MCF 10A (cell line): ENCODE measurements at regions of chr12 and their contacts with region 1.

Region 1: DNA sequence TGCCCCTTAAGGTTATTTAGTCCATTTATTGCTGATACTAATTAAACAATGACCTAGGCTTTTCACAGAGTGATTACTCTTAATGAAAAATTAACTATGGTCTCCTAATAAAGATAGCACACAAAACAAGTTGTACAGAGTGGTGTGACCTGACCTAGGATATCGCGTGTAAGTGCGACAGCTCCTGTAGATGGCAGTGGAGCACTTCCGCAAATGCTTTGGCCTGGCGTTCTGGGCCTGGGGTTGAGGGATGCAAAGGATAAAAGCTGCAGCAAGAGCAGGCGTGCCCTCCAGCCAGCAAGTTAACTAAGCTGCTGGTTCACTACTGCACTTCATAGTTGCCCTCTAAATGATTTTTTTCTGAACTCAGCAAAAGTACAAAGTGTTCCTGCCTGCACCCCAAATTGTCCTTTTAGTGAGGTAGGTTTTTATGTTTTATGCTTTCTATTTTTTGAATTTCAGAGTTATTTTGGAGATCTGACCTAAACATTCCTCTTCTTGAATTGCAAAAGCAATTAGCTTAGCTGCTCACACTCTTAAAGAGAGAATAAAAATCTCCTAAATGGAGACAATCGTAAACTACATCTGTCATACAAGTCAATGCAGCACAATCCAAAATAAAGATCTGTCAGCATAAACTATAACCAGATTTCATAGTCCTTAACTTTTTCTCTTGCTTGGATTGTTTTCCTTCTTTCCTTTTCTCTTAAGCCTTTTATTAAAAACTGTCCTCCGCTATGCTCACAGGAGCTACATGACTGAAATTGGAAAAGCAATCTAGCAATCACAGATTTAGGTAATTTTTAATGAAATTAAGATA is 379.6 kb downstream of the LRIG3 start:
- DNase-seq: peak; percentile 78
- H3K4me3 Mint-ChIP-seq: no peak overlapping the region
- H3K27ac Mint-ChIP-seq: no peak overlapping the region
- H3K4me1 Mint-ChIP-seq: peaks cover 20% of the 10 kb centered on the region
- H3K27me3 Mint-ChIP-seq: no peaks in the 10 kb centered on the region
- CTCF ChIP-seq: peak; percentile 91

Region 2: DNA sequence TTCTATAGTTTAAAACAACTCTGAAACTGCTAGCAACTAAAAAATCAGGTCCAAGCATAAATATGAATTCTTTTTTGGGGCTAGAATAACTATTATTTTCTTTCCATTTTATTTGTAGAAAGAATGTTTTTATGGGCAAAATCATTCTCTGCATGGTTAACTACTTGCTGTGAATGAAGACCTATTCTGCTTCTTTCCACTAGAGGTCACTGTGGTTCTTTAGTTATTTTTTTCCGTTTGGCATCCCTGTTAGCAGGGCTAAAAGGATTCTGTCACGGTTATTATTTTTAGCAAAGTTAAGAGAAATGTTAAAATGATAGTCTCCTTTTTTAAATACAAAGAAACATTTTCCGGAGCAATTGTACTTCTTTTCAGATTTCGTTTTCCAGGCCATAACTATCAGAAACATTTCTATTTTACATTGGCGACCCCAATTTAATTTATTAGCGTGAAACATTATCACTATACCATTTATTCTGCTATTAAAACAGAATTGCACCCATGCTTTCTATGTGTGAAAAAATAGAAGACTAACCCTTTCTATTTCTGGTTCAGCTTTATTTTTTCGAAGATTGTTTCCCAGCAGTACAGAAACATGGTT is 194.6 kb before region 1 on chr12:
- CTCF ChIA-PET with region 1: interaction called, 15 read pairs
- POLR2A ChIA-PET with region 1: interaction called, 3 read pairs
- intact Hi-C with region 1: loop called (anchors 2 kb)
- DNase-seq: peak; percentile 45
- H3K4me3 Mint-ChIP-seq: no peak overlapping the region
- H3K27ac Mint-ChIP-seq: no peak overlapping the region
- H3K4me1 Mint-ChIP-seq: no peaks in the 10 kb centered on the region
- H3K27me3 Mint-ChIP-seq: no peaks in the 10 kb centered on the region
- CTCF ChIP-seq: peak; percentile 55

Region 3: DNA sequence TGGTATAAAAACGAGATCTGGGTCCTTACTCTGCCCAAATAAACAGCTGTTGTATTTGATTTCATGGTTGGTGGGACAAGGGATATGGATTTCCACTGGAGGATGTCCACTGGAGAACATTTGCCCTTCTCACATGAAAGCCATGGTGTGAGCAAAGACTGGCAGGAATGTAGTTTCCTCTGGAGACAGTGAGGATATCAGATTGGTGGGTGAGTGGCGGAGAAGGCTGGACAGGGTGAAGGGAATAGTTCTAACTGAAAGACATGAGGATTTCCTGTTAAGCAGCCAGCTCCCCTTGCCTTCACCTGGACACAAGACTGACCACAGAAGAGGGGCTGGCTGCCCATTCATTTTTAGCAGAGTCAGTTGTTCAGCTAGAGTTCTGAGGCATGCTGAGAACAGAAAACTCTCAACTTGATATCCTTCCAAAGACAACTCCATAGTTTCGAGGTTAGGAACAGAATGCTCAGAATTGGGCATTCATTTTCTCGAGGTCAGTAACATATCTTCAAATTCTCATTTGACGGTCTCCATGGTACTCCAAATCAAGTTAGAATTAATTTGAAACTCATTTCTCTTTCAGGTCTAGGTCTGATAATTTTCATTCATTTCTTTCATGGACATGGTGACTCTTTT is 13.9 kb after region 1 on chr12:
- CTCF ChIA-PET with region 1: interaction called, 26 read pairs
- POLR2A ChIA-PET with region 1: interaction called, 3 read pairs
- intact Hi-C with region 1: no loop called
- DNase-seq: no peak
- H3K4me3 Mint-ChIP-seq: no peak overlapping the region
- H3K27ac Mint-ChIP-seq: no peak overlapping the region
- H3K4me1 Mint-ChIP-seq: peaks cover 5% of the 10 kb centered on the region
- H3K27me3 Mint-ChIP-seq: no peaks in the 10 kb centered on the region
- CTCF ChIP-seq: no peak

Region 4: GRCh38 chr12:58888131-58888783 is 347.6 kb after region 1 on chr12:
- CTCF ChIA-PET with region 1: interaction called, 18 read pairs
- POLR2A ChIA-PET with region 1: interaction called, 3 read pairs
- intact Hi-C with region 1: no loop called
- DNase-seq: peak; percentile 26
- H3K4me3 Mint-ChIP-seq: no peak overlapping the region
- H3K27ac Mint-ChIP-seq: peak overlapping the region; percentile 80
- H3K4me1 Mint-ChIP-seq: peaks cover 11% of the 10 kb centered on the region
- H3K27me3 Mint-ChIP-seq: no peaks in the 10 kb centered on the region
- CTCF ChIP-seq: no peak

Region 5: DNA sequence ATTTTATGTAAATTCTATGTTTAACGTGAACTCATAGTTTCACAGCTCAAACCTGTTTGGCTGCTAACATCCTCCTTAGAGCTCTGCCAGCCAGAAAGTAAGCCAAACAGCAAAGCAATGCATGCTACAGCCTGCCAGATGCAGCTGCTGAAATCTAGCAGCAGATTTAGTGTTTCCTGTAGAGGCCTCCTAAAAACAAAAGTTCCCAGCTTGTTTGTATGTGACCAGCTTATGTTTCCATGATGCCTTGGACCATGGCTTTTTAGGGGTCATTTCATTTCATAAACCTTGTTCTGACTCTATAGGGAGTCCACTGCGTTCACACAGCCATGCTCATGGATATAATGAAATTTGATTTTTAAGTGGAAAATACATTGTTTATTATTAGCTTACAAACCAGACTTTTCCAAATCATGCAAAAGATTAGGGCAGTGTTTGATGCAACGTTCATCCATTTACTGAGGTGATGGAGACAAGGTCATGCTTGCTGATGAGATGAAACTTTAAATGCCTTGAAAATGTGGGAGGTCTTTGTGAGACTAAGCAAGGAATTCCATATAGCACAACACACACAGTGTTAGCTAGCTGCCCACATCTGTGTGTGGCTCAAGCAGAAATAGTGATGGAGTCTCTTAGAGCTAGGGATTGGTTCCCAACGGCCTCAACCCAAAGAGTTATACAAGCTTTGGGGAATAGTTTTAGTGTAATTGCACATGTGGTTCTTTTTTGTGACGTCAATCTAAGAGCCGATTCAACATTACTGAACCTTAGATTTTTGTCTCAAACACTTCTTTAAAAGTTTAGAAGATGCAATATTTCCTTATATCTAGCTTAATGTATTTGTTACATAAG is 537.1 kb after region 1 on chr12:
- CTCF ChIA-PET with region 1: interaction called, 57 read pairs
- POLR2A ChIA-PET with region 1: interaction called, 8 read pairs
- intact Hi-C with region 1: no loop called
- DNase-seq: peak; percentile 49
- H3K4me3 Mint-ChIP-seq: no peak overlapping the region
- H3K27ac Mint-ChIP-seq: peak overlapping the region; percentile 86
- H3K4me1 Mint-ChIP-seq: peaks cover 43% of the 10 kb centered on the region
- H3K27me3 Mint-ChIP-seq: no peaks in the 10 kb centered on the region
- CTCF ChIP-seq: no peak

Region 6: GRCh38 chr12:59113831-59114615 is 573.3 kb after region 1 on chr12:
- CTCF ChIA-PET with region 1: interaction called, 28 read pairs
- POLR2A ChIA-PET with region 1: no interaction called
- intact Hi-C with region 1: no loop called
- DNase-seq: peak; percentile 87
- H3K4me3 Mint-ChIP-seq: no peak overlapping the region
- H3K27ac Mint-ChIP-seq: no peak overlapping the region
- H3K4me1 Mint-ChIP-seq: no peaks in the 10 kb centered on the region
- H3K27me3 Mint-ChIP-seq: no peaks in the 10 kb centered on the region
- CTCF ChIP-seq: peak; percentile 90

Region 7: DNA sequence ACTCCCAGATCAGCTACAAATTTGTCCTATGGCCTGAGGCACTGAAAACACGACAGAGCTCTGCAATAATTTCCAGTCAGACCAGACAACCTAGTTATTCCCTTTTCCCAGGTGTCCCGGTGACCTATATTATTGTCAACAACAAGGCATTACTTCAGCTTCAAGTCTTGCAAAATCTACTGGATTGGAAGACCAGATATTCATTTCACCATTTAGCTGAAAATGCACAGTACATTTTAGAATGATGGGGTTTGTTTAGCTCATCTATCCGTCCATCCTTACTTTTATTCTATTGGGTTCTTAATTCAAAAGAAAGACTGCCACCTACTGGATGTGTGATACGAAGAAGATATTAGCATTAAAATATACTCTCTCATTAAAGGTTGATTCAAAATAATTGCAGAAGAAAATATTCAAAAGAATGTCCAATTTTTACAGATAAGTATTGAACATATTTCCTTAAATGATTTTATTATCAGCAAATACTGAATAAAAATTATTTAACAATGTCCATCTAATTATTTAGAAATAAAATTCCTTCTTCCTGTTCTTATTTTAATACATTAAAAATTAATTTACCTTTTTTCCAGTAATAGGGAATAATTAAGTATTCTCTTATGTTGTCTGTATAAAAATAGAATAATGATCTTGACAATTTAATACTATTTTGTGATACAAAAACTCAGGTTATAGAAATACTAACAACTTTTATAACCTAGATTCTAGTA is 624.5 kb after region 1 on chr12:
- CTCF ChIA-PET with region 1: interaction called, 10 read pairs
- POLR2A ChIA-PET with region 1: no interaction called
- intact Hi-C with region 1: loop called (anchors 5 kb)
- DNase-seq: peak; percentile 56
- H3K4me3 Mint-ChIP-seq: no peak overlapping the region
- H3K27ac Mint-ChIP-seq: no peak overlapping the region
- H3K4me1 Mint-ChIP-seq: no peaks in the 10 kb centered on the region
- H3K27me3 Mint-ChIP-seq: no peaks in the 10 kb centered on the region
- CTCF ChIP-seq: peak; percentile 23